Mammary epithelial cell (primary cell): ENCODE measurements at regions of chr4 and their contacts with region 1.

Region 1: GRCh38 chr4:168374772-168375523 is 56.4 kb upstream of the DDX60 start:
- DNase-seq: no peak
- H3K4me3 ChIP-seq: no peak overlapping the region
- H3K27ac ChIP-seq: no peak overlapping the region
- H3K4me1 ChIP-seq: no peaks in the 10 kb centered on the region
- H3K27me3 ChIP-seq: no peaks in the 10 kb centered on the region
- CTCF ChIP-seq: no peak

Region 2: DNA sequence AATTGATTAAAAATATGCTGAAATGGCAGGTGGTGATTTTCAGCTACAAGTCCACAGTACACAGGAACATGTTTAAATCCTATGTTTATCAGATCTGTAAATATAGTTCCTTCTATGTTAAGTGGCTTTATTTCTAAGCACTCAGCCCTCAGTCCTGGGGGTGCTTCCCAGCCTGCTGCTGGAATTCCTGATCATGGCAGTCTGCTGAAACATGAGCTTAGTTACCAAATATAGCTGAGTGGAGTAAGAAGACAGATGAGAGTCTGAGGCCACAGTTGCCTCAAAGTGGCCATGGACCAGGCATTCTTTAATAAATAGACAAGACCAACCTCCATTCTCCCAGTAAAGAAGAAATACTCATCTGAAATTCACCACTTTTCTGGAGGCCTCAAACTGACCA is 39.3 kb before region 1 on chr4:
- CTCF ChIA-PET with region 1: no interaction called
- dilution Hi-C with region 1: no loop called
- in situ Hi-C with region 1: no loop called
- intact Hi-C with region 1: loop called (anchors 5 kb)
- DNase-seq: no peak
- H3K4me3 ChIP-seq: no peak overlapping the region
- H3K27ac ChIP-seq: no peak overlapping the region
- H3K4me1 ChIP-seq: peaks cover 11% of the 10 kb centered on the region
- H3K27me3 ChIP-seq: peaks cover 3% of the 10 kb centered on the region
- CTCF ChIP-seq: no peak